ENCODE measurements at regions of chr16 and their contacts with region 1.

Region 1: DNA sequence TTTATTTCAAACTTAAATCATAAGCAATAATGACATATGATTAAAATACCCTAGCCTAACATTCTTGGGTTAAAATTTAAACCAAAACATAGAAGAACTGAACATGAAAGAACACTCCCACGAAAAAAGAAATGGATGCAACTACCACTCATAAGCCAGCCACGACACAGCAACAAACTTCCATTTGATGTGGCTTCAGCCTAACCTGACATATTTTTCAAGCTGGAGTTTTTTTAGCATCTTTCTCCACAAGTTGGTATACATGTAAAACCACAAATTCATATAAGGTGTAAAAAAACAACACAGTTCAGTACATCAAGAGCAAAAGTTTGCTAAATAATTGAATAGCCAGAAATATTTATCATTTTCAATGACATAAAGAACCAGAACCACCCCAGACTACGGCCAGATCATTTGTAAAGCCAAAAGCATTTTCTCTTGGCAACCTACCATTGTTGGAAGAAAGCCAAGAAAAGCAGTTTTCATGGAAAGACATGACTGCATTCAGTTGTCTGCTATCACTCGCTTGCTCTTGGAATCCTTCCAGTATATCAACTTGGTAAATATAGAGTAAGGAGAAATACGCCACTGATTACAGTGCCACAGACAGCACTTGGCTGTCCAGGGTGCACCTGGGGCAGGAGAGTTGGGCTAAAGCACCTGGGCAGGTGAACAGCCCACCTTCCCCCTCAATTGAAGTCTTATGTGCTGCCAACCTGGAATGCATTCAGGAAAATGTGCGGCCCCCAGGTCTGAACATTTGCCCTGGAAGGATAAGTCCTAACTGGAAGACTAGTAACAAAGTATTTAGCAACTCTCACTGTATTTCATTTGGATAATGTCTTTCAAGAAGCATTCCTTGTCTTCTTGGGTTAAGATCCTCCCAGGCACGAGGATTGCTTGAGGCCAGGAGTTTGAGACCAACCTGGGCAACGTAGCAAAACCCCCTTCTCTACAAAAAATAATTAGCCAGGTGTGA is 60.5 kb downstream of the CREBBP start:
- DNase-seq: no peak
- ATAC-seq: no peak
- H3K4me3 ChIP-seq: no peak overlapping the region
- H3K27ac ChIP-seq: no peak overlapping the region
- H3K4me1 ChIP-seq: peaks cover 35% of the 10 kb centered on the region
- H3K27me3 ChIP-seq: no peaks in the 10 kb centered on the region; a peak in 1 of 5 replicates
- CTCF ChIP-seq: no peak
- EP300 ChIP-seq: no peak
- POLR2A ChIP-seq: no peak
- RAD21 ChIP-seq: no peak

Region 2: GRCh38 chr16:3879887-3880564 is 60.0 kb after region 1 on chr16:
- CTCF ChIA-PET with region 1: no interaction called
- POLR2A ChIA-PET with region 1: no interaction called
- in situ Hi-C with region 1: no loop called
- intact Hi-C with region 1: loop called (anchors 10 kb)
- DNase-seq: no peak
- ATAC-seq: peak; percentile 52
- H3K4me3 ChIP-seq: peak overlapping the region; percentile 67 to 90 (median 88)
- H3K27ac ChIP-seq: no peak overlapping the region
- H3K4me1 ChIP-seq: peaks cover 80% of the 10 kb centered on the region
- H3K27me3 ChIP-seq: no peaks in the 10 kb centered on the region; a peak in 2 of 5 replicates
- CTCF ChIP-seq: no peak
- EP300 ChIP-seq: no peak
- POLR2A ChIP-seq: no peak
- RAD21 ChIP-seq: no peak